Activated CD4-positive, alpha-beta memory T cell treated with anti-CD3 and anti-CD28 coated beads for 36 hours (primary cell): ENCODE measurements at regions of chr17 and their contacts with region 1.

Region 1: DNA sequence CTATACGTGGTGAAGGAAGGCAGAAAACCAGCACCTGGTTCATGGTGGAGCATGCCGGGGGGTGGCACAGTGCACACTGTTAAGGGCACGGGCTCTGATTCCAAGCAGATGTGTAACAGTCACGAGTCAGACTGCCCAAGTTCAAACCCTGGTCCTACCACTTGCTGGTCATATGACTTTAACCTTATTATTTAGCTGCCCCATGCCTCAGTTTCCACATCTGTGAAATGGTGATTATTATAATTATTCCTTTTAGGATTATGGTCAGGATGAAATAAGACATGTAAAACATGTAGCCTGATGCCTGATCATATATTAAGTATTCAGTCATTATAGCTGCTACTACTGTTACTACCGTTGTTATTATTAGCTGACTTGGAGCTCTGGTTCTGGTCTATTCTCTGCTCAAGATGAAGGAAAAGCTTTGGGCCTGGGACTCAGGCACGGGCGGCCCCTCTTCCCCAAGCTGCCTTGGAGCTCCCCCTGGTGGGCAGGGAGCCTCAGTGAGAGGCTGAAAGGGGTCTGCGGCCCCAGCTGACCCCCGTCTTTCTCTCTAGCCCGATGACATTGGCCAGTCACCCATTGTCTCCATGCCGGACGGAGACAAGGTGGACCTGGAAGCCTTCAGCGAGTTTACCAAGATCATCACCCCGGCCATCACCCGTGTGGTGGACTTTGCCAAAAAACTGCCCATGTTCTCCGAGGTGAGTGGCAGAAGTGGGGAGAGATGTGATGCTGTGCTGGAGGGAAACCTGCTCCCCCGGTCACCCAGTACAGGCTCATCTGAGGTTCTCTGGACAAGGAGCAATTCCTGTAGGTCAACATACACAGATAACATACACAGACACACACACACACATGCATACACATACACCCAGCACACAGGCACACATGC is 14.0 kb downstream of the NR1D1 start:
- DNase-seq: peak; percentile 66
- H3K4me3 Mint-ChIP-seq: no peak overlapping the region
- H3K27ac Mint-ChIP-seq: no peak overlapping the region
- H3K4me1 Mint-ChIP-seq: no peaks in the 10 kb centered on the region
- H3K27me3 Mint-ChIP-seq: no peaks in the 10 kb centered on the region

Region 2: GRCh38 chr17:39889200-39889599 is 197.2 kb before region 1 on chr17:
- CTCF ChIA-PET with region 1: no interaction called
- POLR2A ChIA-PET with region 1: no interaction called
- intact Hi-C with region 1: no loop called
- DNase-seq: no peak
- H3K4me3 Mint-ChIP-seq: no peak overlapping the region
- H3K27ac Mint-ChIP-seq: no peak overlapping the region
- H3K4me1 Mint-ChIP-seq: no peaks in the 10 kb centered on the region
- H3K27me3 Mint-ChIP-seq: peaks cover 3% of the 10 kb centered on the region

Region 3: DNA sequence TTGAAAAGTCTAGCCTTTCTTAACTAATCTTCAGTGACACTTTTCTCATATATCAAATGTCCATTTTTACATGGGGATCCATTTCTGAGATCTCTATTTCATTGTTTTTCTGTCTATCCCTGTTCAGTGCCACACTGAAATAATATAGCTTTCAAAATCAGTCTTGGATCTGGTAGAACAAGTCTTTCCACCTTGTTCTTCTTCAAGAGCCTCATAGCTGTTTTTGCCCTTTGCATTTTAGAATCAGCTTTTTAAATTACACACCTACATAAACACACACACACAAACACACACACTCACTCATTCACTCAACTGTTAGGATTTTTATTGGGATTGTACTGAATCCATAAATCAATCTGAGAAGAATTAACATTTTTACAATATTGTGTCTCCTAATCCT is 187.2 kb before region 1 on chr17:
- CTCF ChIA-PET with region 1: no interaction called
- POLR2A ChIA-PET with region 1: no interaction called
- intact Hi-C with region 1: no loop called
- DNase-seq: no peak
- H3K4me3 Mint-ChIP-seq: no peak overlapping the region
- H3K27ac Mint-ChIP-seq: no peak overlapping the region
- H3K4me1 Mint-ChIP-seq: peaks cover 22% of the 10 kb centered on the region
- H3K27me3 Mint-ChIP-seq: no peaks in the 10 kb centered on the region

Region 4: GRCh38 chr17:40019140-40019991 is 67.0 kb before region 1 on chr17:
- CTCF ChIA-PET with region 1: interaction called, 20 read pairs
- POLR2A ChIA-PET with region 1: no interaction called
- intact Hi-C with region 1: no loop called
- DNase-seq: no peak
- H3K4me3 Mint-ChIP-seq: no peak overlapping the region
- H3K27ac Mint-ChIP-seq: no peak overlapping the region
- H3K4me1 Mint-ChIP-seq: no peaks in the 10 kb centered on the region
- H3K27me3 Mint-ChIP-seq: no peaks in the 10 kb centered on the region

Region 5: GRCh38 chr17:40026816-40027613 is 59.4 kb before region 1 on chr17:
- CTCF ChIA-PET with region 1: interaction called, 38 read pairs
- POLR2A ChIA-PET with region 1: no interaction called
- intact Hi-C with region 1: no loop called
- DNase-seq: peak; percentile 82
- H3K4me3 Mint-ChIP-seq: no peak overlapping the region
- H3K27ac Mint-ChIP-seq: no peak overlapping the region
- H3K4me1 Mint-ChIP-seq: peaks cover 21% of the 10 kb centered on the region
- H3K27me3 Mint-ChIP-seq: no peaks in the 10 kb centered on the region

Region 6: DNA sequence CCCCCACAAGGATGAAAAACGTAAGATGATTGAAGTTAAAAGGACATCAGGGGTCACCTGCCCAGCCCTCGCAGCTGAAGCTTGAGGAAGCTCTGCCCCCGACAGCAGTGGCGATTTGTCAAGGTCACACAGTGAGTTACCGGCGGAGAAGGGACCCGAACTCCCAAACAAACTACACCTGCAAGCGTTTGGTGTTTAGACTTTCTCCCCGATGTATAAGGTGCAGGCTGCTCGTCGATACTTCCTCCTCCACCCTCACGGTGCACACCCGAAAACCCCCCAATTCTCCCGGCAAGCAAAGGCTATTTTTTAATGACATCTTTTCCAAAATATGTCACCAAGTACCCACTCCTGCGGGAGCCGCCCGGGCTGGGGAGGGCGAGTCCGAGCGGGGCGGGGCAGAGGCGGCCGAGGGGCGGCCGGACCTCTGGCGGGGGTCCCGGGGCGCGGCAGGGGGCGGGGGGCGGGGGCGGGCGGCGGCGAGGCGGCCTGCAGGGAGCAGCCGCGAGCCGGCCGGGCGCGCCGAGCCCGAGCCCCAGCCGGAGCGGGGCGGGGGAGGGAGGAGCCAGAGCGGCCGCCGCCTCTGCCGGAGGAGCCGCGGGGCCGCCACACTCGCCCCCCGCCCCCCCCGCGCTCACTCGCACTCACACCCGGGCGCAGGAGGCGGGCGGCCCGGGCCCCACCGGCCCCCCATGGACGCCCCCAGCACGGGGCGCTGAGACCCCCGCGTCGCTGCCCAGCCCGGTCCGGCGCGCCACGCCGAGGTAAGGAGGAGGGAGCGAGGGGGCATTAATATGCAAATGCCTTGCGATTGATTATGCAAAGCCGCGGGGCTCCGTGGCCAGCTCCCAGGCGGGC is 23.8 kb before region 1 on chr17 and contains the start of gene THRA:
- CTCF ChIA-PET with region 1: interaction called, 11 read pairs
- POLR2A ChIA-PET with region 1: no interaction called
- intact Hi-C with region 1: no loop called
- DNase-seq: peak; percentile 72
- H3K4me3 Mint-ChIP-seq: peak within 1 kb of the TSS; percentile 80
- H3K27ac Mint-ChIP-seq: peak within 1 kb of the TSS; percentile 44
- H3K4me1 Mint-ChIP-seq: peaks cover 39% of the 10 kb centered on the region
- H3K27me3 Mint-ChIP-seq: peaks cover 3% of the 10 kb centered on the region
- total RNA-seq, gene THRA: 12.5 to 13.4 TPM

Region 7: DNA sequence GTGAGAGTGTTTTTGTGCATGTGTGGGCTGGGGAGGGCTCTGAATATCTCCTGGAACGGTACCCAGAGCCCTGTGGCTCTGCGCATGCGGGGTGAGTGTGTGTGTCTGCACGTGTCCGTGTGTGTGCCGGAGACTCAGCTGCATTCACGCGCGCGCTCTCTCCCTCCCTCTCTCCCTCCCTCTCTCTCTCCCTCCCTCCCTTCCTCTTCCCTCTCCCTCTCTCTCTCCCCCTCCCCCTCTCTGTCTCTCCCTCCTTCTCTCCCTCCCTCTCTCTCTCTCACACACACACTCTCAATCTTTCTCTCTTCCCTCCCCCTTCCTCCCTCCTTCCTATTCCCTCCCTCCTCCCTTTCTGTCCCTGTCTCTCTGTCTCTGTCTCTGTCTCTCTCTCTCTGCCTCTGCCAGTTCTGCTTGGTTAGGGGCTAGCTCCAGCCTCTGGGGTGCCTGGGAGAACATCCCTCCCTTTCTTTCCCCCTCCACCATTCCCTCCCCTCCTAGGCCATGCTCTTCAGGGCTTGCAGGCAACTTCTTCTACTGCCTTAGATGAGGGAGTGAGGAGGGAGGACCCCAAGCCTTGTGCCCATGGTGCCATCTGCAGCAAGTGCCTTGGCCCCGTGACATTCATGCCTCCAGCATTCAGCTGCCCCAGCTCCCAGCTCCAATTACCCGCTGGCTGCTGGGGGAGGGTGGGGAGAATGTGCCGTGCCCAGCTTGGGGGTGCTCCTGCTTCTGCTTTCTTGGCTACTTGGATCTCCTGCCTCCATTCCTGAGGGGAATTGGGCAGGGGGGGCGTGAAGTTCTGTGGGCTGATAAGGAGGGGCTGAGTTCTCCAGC is 17.3 kb before region 1 on chr17:
- CTCF ChIA-PET with region 1: interaction called, 84 read pairs
- POLR2A ChIA-PET with region 1: no interaction called
- intact Hi-C with region 1: no loop called
- DNase-seq: peak; percentile 86
- H3K4me3 Mint-ChIP-seq: peak overlapping the region; percentile 78
- H3K27ac Mint-ChIP-seq: peak overlapping the region; percentile 95
- H3K4me1 Mint-ChIP-seq: peaks cover 56% of the 10 kb centered on the region
- H3K27me3 Mint-ChIP-seq: no peaks in the 10 kb centered on the region

Region 8: DNA sequence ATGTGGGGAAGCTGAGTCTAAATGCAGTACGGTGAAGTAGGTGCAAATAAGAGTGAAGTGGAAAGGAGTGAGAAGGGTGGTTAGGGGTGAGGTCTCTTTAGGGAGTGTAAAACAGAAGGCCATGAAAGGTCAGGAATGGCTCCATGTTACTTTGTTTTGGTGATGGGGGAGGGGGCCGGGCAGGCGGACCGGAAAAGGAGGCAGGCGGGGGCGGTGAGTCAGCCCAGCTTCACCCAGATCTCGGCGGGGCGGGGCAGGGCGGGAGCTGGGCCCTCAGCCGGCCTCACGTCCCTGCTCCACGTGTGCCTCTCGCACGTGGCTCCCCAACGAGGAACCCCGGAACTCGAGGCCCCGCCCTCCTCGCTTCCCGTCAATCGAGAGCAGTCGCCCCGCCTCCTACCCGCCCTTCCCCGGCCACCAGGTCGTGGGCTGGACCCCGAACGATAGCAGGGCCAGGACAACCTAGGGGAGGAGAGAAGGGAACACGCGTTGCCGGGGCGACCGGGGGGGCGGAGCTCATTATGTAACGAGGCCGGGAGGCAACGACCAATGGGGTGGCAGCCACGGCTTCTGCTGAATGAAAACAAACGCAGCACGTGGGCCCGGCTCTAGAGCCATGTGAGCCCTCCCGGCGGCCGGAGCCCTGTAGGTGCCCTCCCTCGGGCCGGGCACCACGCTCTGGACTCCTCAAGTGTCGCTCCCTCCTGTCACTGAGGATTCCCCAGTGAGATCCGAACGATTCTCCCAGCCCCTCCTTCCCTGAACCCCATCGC is 12.6 kb after region 1 on chr17:
- CTCF ChIA-PET with region 1: interaction called, 12 read pairs
- POLR2A ChIA-PET with region 1: no interaction called
- intact Hi-C with region 1: no loop called
- DNase-seq: peak; percentile 99
- H3K4me3 Mint-ChIP-seq: peak overlapping the region; percentile 88
- H3K27ac Mint-ChIP-seq: peak overlapping the region; percentile 91
- H3K4me1 Mint-ChIP-seq: peaks cover 85% of the 10 kb centered on the region
- H3K27me3 Mint-ChIP-seq: no peaks in the 10 kb centered on the region

Region 9: DNA sequence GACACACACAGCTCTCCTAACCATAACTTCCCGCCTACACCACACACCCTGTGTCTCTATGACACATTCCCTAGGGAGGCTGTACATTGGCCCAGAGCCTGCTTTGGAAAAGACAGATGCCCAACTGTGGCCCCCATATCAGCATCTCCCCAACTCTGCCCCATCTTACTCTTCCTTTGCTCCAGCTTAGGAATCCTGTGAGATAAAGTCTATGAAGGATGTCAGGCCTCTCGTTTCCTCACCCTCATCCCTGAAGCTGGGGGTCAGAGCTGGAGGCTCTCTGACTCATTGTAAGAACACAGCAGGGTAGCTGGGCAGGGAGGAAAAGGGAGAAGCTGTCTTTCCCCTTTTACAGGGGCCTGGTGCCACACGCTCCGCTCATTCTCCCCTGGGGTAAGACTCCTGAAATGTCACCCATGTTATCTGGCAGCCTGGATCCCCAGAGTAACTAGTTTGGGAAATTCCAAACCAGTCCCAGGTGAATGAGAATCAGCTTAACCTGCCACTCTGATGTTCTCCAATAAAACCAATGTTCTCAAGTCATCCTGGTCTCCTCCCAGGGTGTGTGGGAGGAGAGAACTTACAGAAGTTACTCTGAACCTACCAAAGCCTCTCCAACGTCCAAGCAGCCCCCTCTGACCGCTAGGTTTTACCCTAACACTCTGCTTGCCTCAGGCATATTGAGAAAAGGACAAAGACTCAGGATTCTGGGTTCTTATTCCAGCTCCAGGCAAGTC is 93.7 kb after region 1 on chr17:
- CTCF ChIA-PET with region 1: no interaction called
- POLR2A ChIA-PET with region 1: no interaction called
- intact Hi-C with region 1: no loop called
- DNase-seq: no peak
- H3K4me3 Mint-ChIP-seq: no peak overlapping the region
- H3K27ac Mint-ChIP-seq: no peak overlapping the region
- H3K4me1 Mint-ChIP-seq: peaks cover 7% of the 10 kb centered on the region
- H3K27me3 Mint-ChIP-seq: no peaks in the 10 kb centered on the region

Region 10: GRCh38 chr17:40264458-40265185 is 178.2 kb after region 1 on chr17:
- CTCF ChIA-PET with region 1: no interaction called
- POLR2A ChIA-PET with region 1: no interaction called
- intact Hi-C with region 1: no loop called
- DNase-seq: no peak
- H3K4me3 Mint-ChIP-seq: no peak overlapping the region
- H3K27ac Mint-ChIP-seq: no peak overlapping the region
- H3K4me1 Mint-ChIP-seq: peaks cover 10% of the 10 kb centered on the region
- H3K27me3 Mint-ChIP-seq: no peaks in the 10 kb centered on the region